Panc1 (cell line): ENCODE measurements at regions of chr7 and their contacts with region 1.

Region 1: DNA sequence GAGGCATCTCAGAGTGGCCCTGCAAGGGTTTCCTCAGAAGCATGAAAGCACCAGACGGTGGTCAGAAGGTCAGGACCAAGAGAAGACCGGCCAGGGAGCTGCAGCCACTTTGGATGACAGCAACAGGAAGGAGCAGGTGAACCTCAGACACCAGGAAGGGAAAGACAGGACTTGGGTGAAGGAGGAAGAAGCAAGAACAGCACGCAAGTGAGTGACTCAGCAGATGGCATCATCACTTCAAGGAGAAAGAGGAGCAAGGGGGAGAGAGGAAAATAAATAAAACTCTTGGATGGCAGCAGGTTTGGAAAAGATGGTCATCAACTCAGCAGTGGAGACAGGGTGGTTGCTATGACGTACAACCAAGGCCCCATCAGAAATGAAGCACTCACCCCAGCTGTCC is 31.6 kb downstream of the NCAPG2 start:
- DNase-seq: no peak
- ATAC-seq: no peak; the same call in 1 of the 2 replicates
- H3K4me3 ChIP-seq: no peak overlapping the region
- H3K27ac ChIP-seq: no peak overlapping the region
- H3K4me1 ChIP-seq: no peaks in the 10 kb centered on the region
- H3K27me3 ChIP-seq: no peaks in the 10 kb centered on the region
- CTCF ChIP-seq: no peak

Region 2: DNA sequence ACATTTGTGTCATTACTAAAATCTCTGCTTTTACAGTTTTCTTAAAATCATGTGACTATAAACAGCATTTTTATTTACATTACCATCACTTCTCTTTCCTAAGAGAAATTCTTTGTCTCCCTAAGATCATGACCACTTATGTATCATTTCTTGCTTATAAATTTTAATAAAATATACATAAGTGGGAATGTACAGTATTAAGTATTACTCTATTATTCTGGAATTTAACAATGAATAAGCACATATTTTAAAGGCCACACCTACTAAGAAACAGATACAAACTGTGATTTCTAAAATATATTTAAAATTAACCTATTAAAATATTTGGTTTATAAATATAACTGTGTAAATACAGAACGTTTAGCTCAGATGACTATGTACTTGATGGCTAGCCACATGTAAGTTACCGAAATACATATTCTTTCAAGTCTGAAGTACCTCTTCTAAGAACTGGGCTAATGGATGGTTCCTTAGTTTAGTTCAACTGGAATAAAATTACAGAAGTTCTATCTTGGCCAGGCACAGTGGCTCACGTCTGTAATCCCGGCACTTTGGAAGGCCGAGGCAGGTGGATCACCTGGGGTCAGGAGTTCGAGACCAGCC is 52.0 kb before region 1 on chr7:
- CTCF ChIA-PET with region 1: no interaction called
- POLR2A ChIA-PET with region 1: interaction called, 10 read pairs
- in situ Hi-C with region 1: no loop called
- intact Hi-C with region 1: no loop called
- DNase-seq: no peak
- ATAC-seq: no peak
- H3K4me3 ChIP-seq: no peak overlapping the region
- H3K27ac ChIP-seq: no peak overlapping the region
- H3K4me1 ChIP-seq: no peaks in the 10 kb centered on the region
- H3K27me3 ChIP-seq: no peaks in the 10 kb centered on the region
- CTCF ChIP-seq: no peak

Region 3: DNA sequence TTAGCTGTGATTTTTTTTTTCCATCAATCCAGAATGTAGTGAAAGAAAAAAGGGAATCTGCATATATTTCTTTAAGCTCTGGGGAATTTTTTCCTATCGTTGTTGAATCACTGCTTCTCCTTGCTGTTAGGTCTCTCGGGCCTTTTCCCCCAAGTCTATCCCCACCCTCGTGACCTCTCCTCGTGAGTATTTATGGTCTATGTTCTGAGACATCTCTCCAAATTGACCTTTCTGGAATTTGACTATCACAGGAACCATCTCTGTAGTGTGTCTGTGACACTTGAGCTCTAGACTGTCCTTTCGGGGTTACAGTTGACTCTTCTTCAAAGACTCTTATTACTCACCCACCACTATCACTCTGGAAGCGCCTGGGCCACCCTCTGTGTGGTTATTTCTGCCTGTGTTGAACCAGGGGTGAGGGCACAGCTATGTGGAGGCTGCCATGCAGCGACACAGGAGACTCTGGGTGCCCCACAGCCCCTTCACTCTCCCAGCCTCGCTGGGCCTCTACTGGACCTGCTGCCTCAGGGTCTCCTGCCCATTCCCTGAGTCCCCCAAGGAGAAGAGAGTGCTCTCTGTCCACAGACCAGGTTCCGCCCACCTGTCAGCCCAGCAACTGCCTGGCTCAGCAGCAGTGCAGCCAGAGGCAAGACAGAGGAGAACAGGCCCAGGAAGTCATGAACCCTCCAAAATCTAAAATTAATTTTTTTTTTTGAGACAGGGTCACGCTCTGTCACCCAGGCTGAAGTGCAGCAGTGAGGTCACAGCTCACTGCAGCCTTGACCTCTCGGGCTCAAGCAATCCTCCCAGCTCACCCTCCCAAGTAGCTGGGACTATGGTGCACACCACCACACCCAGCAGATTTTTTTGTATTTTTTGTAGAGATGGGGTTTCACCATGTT is 39.7 kb before region 1 on chr7:
- CTCF ChIA-PET with region 1: no interaction called
- POLR2A ChIA-PET with region 1: no interaction called
- in situ Hi-C with region 1: no loop called
- intact Hi-C with region 1: no loop called
- DNase-seq: no peak
- ATAC-seq: no peak
- H3K4me3 ChIP-seq: no peak overlapping the region
- H3K27ac ChIP-seq: no peak overlapping the region
- H3K4me1 ChIP-seq: no peaks in the 10 kb centered on the region
- H3K27me3 ChIP-seq: no peaks in the 10 kb centered on the region
- CTCF ChIP-seq: no peak